H1 (cell line): ENCODE measurements at regions of chr6 and their contacts with region 1.

Region 1: DNA sequence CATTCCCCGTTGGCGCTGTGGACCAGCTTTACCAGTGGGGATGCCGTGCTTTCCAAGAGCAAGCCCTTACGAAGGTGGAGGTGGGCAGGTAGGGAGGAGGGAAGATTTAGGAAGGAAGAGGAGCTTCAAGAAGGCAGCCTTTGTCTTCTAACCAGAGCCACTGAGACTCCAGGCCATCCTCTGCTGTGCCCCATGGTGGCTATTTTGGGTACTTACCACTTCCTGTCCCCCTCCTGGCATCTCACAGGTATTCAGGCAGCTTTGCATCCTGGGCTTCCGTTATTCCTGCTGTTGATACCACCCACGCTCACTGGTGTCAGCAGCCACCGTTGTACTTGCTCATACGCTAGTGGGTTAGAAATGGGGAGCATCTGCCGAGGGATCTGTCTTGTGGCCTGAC is 22.9 kb downstream of the ERMARD start:
- DNase-seq: no peak
- H3K4me3 ChIP-seq: no peak overlapping the region
- H3K27ac ChIP-seq: no peak overlapping the region
- H3K4me1 ChIP-seq: no peaks in the 10 kb centered on the region
- H3K27me3 ChIP-seq: no peaks in the 10 kb centered on the region
- CTCF ChIP-seq: peak in 1 of 3 experiments; percentile 42; a peak in 1 of 4 replicates
- EP300 ChIP-seq: no peak
- POLR2A ChIP-seq: no peak
- RAD21 ChIP-seq: 0 out of 4 replicates have a peak, but pooled peaks of 1 of the 2 experiments have one; percentile 10

Region 2: DNA sequence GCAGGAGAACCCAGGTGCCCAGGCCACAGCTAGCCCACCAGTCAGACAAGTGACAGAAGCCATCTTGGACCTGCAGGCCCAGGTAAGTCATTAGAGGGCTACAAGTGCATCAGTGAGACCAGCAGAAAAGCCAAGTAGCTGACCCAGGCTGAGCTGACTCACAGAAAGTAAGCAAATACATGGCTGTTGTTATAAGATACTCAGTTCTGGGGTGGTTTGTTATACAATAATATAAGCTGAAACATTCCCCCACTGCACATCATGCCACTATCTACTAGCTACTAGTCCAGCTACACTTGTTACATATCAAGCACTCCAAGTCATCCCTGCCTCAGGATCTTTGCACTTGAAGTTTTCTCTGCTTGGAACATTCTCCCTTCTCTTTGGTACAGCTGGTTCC is 33.0 kb before region 1 on chr6:
- CTCF ChIA-PET with region 1: no interaction called
- POLR2A ChIA-PET with region 1: no interaction called
- DNase-seq: no peak
- H3K4me3 ChIP-seq: no peak overlapping the region
- H3K27ac ChIP-seq: no peak overlapping the region
- H3K4me1 ChIP-seq: peaks cover 0 to 4% (median 2%) of the 10 kb centered on the region in 4 experiments; a peak in 3 of 7 replicates
- H3K27me3 ChIP-seq: no peaks in the 10 kb centered on the region
- CTCF ChIP-seq: no peak
- EP300 ChIP-seq: no peak
- POLR2A ChIP-seq: no peak
- RAD21 ChIP-seq: no peak

Region 3: DNA sequence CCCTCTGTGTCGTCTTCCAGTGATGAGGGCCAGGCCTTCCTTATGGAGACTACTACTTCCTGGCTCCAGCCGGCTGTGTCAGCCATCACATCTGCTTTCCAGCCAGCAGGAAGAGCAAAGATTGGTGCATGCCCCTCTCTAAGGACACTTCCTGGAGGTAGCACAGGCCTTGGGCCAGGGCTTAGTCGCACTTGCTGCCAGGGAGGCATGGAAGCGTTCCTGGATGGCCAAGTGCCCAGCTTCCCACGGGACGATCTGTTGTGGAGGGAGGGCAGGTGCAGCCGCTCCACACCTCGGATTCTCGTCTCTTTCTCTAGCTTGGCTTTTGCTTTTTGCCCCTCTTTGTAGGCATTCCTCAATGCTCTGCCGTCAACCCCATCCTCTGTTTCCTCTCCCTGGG is 11.0 kb before region 1 on chr6:
- CTCF ChIA-PET with region 1: interaction called, 6 read pairs
- POLR2A ChIA-PET with region 1: interaction called, 12 read pairs
- DNase-seq: no peak
- H3K4me3 ChIP-seq: no peak overlapping the region
- H3K27ac ChIP-seq: no peak overlapping the region
- H3K4me1 ChIP-seq: no peaks in the 10 kb centered on the region
- H3K27me3 ChIP-seq: no peaks in the 10 kb centered on the region
- CTCF ChIP-seq: no peak
- EP300 ChIP-seq: no peak
- POLR2A ChIP-seq: no peak
- RAD21 ChIP-seq: no peak